MCF 10A (cell line): ENCODE measurements at regions of chr9 and their contacts with region 1.

Region 1: DNA sequence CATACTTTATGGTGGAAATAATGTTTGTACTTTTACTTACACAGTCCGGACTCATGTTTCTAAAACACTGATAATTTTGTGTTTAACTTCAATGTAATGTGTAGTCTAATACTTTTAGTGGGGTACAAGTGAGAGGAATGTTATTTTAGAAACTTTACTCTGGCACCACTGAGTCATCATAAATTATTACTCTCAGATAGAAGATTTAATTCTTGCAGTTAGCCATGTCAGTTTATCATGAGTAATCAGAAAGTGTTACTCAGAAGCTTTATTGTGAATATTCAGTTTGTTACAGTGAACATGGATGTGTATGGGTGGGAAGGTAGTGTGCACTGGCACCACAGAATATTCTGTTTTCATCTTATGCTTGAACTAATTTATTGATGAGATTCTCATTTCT is 20.0 kb downstream of the OGN start:
- DNase-seq: peak; percentile 34
- H3K4me3 Mint-ChIP-seq: peak overlapping the region; percentile 6
- H3K27ac Mint-ChIP-seq: peak overlapping the region; percentile 79
- H3K4me1 Mint-ChIP-seq: peaks cover 20% of the 10 kb centered on the region
- H3K27me3 Mint-ChIP-seq: no peaks in the 10 kb centered on the region
- CTCF ChIP-seq: no peak

Region 2: DNA sequence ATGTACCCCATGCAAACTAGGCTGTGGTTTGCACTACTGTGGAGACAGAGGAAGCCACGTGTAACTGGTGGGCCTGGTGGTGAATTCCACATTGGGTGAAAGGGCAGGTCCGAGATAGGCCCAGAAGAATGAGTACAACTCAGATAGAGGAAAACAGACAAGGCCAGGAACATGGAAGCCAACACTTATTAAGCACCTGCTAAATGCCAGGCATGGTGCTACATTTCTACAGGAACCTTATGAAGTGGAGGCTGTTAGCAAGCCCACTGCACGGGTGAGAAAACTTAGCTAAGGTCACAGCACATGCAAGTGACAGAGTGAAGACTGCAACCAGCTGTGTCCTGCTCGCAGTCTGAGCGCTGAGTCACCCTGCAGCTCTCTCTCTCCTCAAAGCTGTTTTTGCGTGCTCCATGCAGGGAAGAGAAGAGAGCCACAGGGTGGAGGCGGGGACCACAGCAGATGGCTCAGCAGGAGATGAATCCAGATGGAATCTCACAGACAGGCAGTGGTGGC is 203.7 kb before region 1 on chr9:
- CTCF ChIA-PET with region 1: no interaction called
- POLR2A ChIA-PET with region 1: no interaction called
- intact Hi-C with region 1: no loop called
- DNase-seq: peak; percentile 56
- H3K4me3 Mint-ChIP-seq: no peak overlapping the region
- H3K27ac Mint-ChIP-seq: no peak overlapping the region
- H3K4me1 Mint-ChIP-seq: peaks cover 5% of the 10 kb centered on the region
- H3K27me3 Mint-ChIP-seq: peaks cover 17% of the 10 kb centered on the region
- CTCF ChIP-seq: no peak

Region 3: GRCh38 chr9:92404042-92404836 is 19.9 kb after region 1 on chr9 and contains the start of gene OGN:
- CTCF ChIA-PET with region 1: interaction called, 4 read pairs
- POLR2A ChIA-PET with region 1: interaction called, 10 read pairs
- intact Hi-C with region 1: no loop called
- DNase-seq: no peak
- H3K4me3 Mint-ChIP-seq: no peak within 1 kb of the TSS
- H3K27ac Mint-ChIP-seq: no peak within 1 kb of the TSS
- H3K4me1 Mint-ChIP-seq: no peaks in the 10 kb centered on the region
- H3K27me3 Mint-ChIP-seq: no peaks in the 10 kb centered on the region
- CTCF ChIP-seq: no peak
- total RNA-seq, gene OGN: not detected in 2 replicates